ENCODE measurements at regions of chr15 and their contacts with region 1.

Region 1: DNA sequence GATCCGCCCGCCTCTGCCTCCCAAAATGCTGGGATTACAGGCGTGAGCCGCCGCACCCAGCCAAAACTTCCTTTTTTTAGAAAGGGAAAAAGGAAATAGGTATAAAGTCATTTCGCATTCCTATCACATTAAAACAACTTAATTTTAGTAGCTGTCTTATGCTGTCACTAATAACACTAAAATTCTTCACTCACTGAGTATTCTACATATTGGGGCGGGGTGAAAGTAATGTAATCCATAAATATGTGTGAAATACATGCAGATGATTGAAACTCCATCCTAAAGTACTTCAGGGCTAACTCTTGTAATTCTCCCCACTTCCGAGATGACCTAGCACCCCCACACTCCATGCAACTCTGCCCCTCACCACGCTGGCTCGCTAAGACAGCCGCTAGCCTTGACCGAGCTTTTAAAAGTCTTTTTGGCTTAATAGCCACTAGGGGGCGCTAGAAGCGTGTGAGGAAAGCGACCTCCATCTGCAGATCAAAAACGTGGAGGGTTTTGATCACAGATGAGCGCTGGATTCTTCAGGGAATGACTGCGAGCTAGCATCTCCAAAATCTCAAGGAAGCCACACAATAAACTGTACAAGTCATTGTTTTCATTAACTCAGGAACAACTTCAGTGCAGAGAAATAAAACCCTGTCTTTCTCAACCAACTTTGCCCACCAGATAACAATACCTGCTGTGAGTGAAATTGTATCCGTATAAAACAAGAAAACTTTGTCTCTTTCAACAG is 129.3 kb upstream of the IGF1R start:
- DNase-seq: peak; percentile 87

Region 2: DNA sequence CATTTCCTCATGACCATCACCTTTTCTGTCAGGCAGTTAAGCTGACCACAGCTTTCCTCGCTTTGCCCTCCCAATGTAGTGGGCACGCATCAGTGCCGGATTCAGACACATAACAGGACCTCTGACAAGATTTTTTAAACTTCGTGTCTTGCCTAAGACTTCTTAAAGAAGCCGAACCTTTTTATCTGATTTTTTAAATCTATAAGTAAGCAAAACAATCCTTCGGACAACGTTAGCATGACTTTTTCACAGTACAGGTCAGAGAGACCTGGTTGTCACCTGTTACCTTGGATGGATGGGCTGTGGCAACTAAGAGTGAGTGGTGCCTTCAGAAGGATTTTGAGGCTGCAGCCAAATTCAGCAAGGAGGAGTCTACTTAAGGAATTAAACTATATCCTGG is 27.0 kb before region 1 on chr15:
- CTCF ChIA-PET with region 1: no interaction called
- POLR2A ChIA-PET with region 1: no interaction called
- DNase-seq: no peak

Region 3: DNA sequence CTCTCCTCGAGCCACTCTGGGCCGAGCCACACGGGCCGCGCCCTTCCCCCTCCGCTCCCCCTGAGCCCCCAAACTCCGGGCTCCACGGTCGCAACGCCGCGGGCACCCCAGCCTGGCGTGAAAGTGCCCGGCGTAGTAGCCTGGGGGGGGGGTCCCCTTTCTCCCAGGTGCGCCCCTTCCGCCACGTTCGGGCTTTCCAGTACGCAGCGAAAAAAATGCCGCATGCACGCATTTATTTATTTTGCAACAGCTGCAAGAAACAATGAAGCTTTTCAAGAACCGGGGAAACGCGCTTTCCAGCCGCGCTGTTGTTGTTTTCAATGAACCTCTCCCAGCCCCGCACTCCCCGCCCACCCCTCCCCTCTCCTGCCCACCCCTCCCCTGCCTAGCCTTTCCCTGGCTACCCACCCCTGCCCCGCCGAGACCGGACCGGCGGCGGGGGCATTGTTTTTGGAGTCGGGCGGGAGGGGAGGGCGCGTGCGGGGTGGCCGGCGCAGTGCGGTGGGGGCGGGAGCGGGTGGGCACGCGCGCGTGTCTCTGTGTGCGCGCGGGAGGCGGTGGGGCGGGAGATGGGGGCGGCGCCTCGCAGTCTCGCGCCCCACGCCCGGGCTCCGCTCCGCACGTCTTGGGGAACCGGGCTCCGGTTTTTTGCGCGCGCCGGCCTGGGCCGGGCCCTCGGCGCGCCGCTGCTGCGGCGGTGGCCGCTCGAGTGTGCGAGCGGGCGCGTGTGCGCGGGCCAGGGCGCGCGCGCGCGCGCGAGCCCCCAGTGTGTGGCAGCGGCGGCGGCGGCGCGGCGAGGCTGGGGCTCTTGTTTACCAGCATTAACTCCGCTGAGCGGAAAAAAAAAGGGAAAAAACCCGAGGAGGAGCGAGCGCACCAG is 129.0 kb after region 1 on chr15 and contains the start of gene IGF1R:
- CTCF ChIA-PET with region 1: interaction called, 7 read pairs
- POLR2A ChIA-PET with region 1: interaction called, 12 read pairs
- DNase-seq: peak; percentile 87

Region 4: GRCh38 chr15:98658831-98659699 is 140.1 kb after region 1 on chr15:
- CTCF ChIA-PET with region 1: interaction called, 12 read pairs
- POLR2A ChIA-PET with region 1: interaction called, 3 read pairs
- DNase-seq: peak; percentile 70